Activated CD4-positive, alpha-beta memory T cell treated with anti-CD3 and anti-CD28 coated beads for 36 hours (primary cell): ENCODE measurements at regions of chr11 and their contacts with region 1.

Region 1: GRCh38 chr11:17230867-17231851 is 23.4 kb upstream of the PIK3C2A start:
- DNase-seq: peak; percentile 63
- H3K4me3 Mint-ChIP-seq: no peak overlapping the region
- H3K27ac Mint-ChIP-seq: no peak overlapping the region
- H3K4me1 Mint-ChIP-seq: peaks cover 13% of the 10 kb centered on the region
- H3K27me3 Mint-ChIP-seq: peaks cover 11% of the 10 kb centered on the region

Region 2: GRCh38 chr11:17244046-17244445 is 12.9 kb after region 1 on chr11:
- CTCF ChIA-PET with region 1: interaction called, 18 read pairs
- POLR2A ChIA-PET with region 1: no interaction called
- intact Hi-C with region 1: loop called (anchors 1 kb)
- DNase-seq: no peak
- H3K4me3 Mint-ChIP-seq: no peak overlapping the region
- H3K27ac Mint-ChIP-seq: no peak overlapping the region
- H3K4me1 Mint-ChIP-seq: peaks cover 3% of the 10 kb centered on the region
- H3K27me3 Mint-ChIP-seq: peaks cover 18% of the 10 kb centered on the region

Region 3: DNA sequence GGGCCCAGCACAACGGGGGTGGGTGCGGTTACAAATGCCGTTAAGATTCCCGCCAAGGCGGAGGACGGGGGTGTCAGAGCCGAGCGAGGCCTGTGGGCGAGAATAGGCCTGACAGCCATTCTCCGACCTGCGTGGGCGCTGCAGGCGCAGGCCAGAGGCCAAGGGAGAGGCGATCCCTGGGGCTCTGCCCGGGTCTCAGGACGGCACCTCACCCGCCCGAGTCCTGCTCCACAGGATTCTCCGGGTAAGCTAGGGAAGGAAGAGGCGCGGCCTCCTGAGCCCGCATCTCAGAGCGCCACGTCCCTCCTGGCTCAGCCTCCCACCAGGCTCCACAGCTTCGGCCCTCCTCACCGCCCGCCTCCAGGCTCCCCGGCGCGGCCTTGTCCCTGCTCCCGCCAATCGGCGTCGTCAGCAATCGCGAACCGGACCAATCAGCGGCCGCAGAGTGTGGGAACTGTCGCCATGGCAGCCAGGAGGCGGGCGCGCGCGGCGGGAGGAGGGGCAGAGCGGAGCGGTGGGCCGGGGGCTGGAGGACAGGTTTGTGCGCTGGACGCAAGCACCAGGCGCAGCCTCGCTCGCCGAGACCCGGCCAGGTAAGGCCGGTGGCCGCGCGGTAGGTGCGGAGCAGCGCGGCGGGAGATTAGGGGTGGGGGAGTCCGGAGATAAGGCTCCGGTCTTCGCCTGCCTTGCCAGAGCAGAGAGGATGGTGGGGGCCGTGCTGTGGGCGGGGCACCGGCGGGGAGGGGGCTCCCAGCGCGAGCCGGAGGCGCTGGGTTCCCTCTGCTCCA is 45.3 kb after region 1 on chr11 and contains the start of gene NUCB2:
- CTCF ChIA-PET with region 1: interaction called, 13 read pairs
- POLR2A ChIA-PET with region 1: no interaction called
- intact Hi-C with region 1: loop called (anchors 1 kb)
- DNase-seq: peak; percentile 97
- H3K4me3 Mint-ChIP-seq: peak within 1 kb of the TSS; percentile 89
- H3K27ac Mint-ChIP-seq: peak within 1 kb of the TSS; percentile 87
- H3K4me1 Mint-ChIP-seq: peaks cover 32% of the 10 kb centered on the region
- H3K27me3 Mint-ChIP-seq: no peaks in the 10 kb centered on the region
- total RNA-seq, gene NUCB2: 38.1 to 38.2 TPM

Region 4: GRCh38 chr11:17504330-17505107 is 273.4 kb after region 1 on chr11:
- CTCF ChIA-PET with region 1: interaction called, 25 read pairs
- POLR2A ChIA-PET with region 1: no interaction called
- intact Hi-C with region 1: loop called (anchors 1 kb)
- DNase-seq: peak; percentile 81
- H3K4me3 Mint-ChIP-seq: no peak overlapping the region
- H3K27ac Mint-ChIP-seq: no peak overlapping the region
- H3K4me1 Mint-ChIP-seq: no peaks in the 10 kb centered on the region
- H3K27me3 Mint-ChIP-seq: peaks cover 10% of the 10 kb centered on the region

Region 5: DNA sequence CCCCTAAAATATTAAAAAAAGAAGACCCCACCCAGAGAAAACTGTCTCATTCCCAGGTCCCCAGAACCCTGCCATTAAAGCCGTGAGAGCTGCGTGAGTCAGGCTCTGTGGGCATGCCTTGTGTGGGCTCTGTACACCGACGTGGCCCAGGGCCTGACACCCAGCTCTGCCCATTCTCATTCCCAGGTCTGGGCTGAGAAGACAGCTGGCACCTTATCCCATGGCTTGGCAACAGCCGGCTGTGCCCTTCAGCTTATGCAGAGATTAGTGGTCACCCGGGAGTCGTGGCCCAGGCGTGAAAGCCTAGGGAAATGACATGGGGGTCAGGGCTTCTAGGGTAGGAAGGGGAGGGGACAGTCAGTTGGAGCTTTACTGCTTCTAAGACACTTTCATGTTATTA is 347.8 kb after region 1 on chr11:
- CTCF ChIA-PET with region 1: no interaction called
- POLR2A ChIA-PET with region 1: no interaction called
- intact Hi-C with region 1: no loop called
- DNase-seq: no peak
- H3K4me3 Mint-ChIP-seq: no peak overlapping the region
- H3K27ac Mint-ChIP-seq: no peak overlapping the region
- H3K4me1 Mint-ChIP-seq: no peaks in the 10 kb centered on the region
- H3K27me3 Mint-ChIP-seq: peaks cover 1% of the 10 kb centered on the region